ENCODE measurements at regions of chr9 and their contacts with region 1.

Region 1: GRCh38 chr9:112705768-112706427 is 12.0 kb downstream of the INIP start:
- DNase-seq: peak; percentile 13
- H3K4me3 ChIP-seq: no peak overlapping the region
- H3K27ac ChIP-seq: no peak overlapping the region
- H3K4me1 ChIP-seq: no peaks in the 10 kb centered on the region
- H3K27me3 ChIP-seq: no peaks in the 10 kb centered on the region

Region 2: DNA sequence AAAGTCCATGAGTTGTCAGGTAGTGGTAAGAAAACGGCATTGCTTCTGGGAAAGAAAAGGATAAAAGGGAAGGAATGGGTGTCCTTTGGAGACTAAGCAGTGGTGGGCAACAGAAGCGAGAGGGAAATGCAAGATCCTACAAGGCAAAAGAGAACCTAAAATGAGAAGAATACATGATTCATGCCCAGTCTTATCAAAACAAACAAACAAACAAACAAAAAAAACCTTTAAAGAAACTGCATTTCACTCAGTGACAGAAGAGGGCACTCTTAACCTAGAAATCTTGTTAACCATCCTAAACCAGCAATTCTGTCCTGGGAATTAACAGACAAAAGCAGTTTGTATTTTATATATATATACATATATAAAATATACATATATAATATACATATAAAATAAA is 619.3 kb before region 1 on chr9:
- in situ Hi-C with region 1: loop called (anchors 10 kb)
- DNase-seq: peak; percentile 68
- H3K4me3 ChIP-seq: no peak overlapping the region
- H3K27ac ChIP-seq: no peak overlapping the region
- H3K4me1 ChIP-seq: no peaks in the 10 kb centered on the region
- H3K27me3 ChIP-seq: no peaks in the 10 kb centered on the region

Region 3: GRCh38 chr9:112764344-112764743 is 58.4 kb after region 1 on chr9:
- in situ Hi-C with region 1: no loop called
- DNase-seq: peak; percentile 94
- H3K4me3 ChIP-seq: peak overlapping the region; percentile 34
- H3K27ac ChIP-seq: peak overlapping the region; percentile 51
- H3K4me1 ChIP-seq: peaks cover 33% of the 10 kb centered on the region
- H3K27me3 ChIP-seq: no peaks in the 10 kb centered on the region

Measured in GM23248 (cell line).